T-cell (primary cell): ENCODE measurements at regions of chr2 and their contacts with region 1.

Region 1: DNA sequence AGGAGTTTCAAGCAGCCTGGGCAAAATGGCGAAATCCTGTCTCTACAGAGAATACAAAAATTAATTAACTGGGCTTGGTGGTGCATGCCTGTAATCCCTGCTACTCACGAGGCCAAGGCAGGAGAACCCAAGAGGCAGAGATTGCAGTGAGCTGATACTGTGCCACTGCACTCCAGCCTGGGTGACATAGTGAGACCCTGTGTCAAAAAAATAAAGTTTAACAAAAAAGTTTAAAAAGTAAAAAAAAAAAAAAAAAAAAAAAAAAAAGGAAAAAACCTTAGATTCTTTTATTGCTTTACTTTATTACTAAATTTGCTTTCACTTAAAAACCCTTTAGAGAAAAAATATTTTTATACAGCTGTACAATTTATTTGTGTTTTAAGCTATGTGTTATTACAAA is 10.7 kb downstream of the CREB1 start:
- DNase-seq: no peak
- ATAC-seq: no peak
- H3K4me3 ChIP-seq: no peak overlapping the region
- H3K4me3 Mint-ChIP-seq: peak overlapping the region in 1 of 3 donors; percentile 33
- H3K27ac ChIP-seq: no peak overlapping the region
- H3K27ac Mint-ChIP-seq: peak overlapping the region in 1 of 2 donors; percentile 35
- H3K4me1 ChIP-seq: peaks cover 11 to 34% of the 10 kb centered on the region in 2 experiments
- H3K4me1 Mint-ChIP-seq: peaks cover 68 to 83% (median 77%) of the 10 kb centered on the region in 3 donors
- H3K27me3 ChIP-seq: no peaks in the 10 kb centered on the region
- H3K27me3 Mint-ChIP-seq: no peaks in the 10 kb centered on the region

Region 2: DNA sequence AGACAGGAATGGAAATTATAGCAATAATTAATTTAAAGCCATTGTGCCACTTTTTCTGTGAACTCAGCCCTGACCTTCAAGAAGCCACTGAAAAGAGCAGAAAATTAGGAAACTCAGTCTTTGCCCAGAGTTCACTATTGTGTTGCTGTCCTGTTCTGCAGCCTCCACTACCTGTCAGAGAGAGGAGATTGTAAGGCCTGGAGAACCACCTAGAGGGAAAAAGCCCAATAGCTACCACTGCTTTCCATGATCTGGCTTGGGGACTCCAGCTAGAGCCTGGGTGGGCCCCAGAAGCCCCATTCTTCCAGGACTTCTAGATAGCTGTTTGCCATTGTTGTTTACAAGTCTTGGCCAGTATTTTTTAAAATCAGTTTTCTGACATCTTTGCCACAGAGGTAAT is 198.6 kb before region 1 on chr2:
- CTCF ChIA-PET with region 1: no interaction called
- POLR2A ChIA-PET with region 1: interaction called in 1 of 2 experiments, 15 read pairs
- DNase-seq: no peak
- ATAC-seq: no peak
- H3K4me3 ChIP-seq: no peak overlapping the region
- H3K4me3 Mint-ChIP-seq: no peak overlapping the region
- H3K27ac ChIP-seq: no peak overlapping the region
- H3K27ac Mint-ChIP-seq: no peak overlapping the region
- H3K4me1 ChIP-seq: peaks cover 0 to 5% of the 10 kb centered on the region in 2 experiments
- H3K4me1 Mint-ChIP-seq: peaks cover 11 to 12% (median 12%) of the 10 kb centered on the region in 3 donors
- H3K27me3 ChIP-seq: peaks cover 0 to 7% of the 10 kb centered on the region in 2 experiments
- H3K27me3 Mint-ChIP-seq: no peaks in the 10 kb centered on the region

Region 3: DNA sequence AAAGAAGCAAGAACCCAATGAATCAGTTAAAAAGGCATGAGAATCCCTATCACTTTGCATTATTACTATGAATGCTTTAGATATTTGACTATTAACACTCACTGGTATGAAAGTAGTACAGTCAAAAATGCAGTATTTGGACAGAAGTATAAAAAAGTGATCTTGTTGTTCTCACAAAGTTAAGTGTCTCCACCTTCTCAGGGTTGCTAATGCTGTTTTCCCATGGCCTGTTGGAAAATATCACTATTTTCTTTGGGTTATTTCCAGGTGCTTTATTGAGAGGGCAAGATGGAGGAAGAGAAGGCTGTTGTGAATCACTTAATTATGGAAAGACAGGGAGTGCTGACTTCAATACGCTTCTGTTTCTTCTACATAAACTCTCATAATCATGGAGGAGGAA is 24.2 kb before region 1 on chr2:
- CTCF ChIA-PET with region 1: interaction called in 1 of 2 experiments, 11 read pairs
- POLR2A ChIA-PET with region 1: no interaction called
- DNase-seq: no peak
- ATAC-seq: no peak
- H3K4me3 ChIP-seq: no peak overlapping the region
- H3K4me3 Mint-ChIP-seq: no peak overlapping the region
- H3K27ac ChIP-seq: no peak overlapping the region
- H3K27ac Mint-ChIP-seq: no peak overlapping the region
- H3K4me1 ChIP-seq: peaks cover 0 to 13% of the 10 kb centered on the region in 2 experiments
- H3K4me1 Mint-ChIP-seq: peaks cover 0 to 10% (median 5%) of the 10 kb centered on the region in 3 donors
- H3K27me3 ChIP-seq: no peaks in the 10 kb centered on the region
- H3K27me3 Mint-ChIP-seq: peaks cover 0 to 3% of the 10 kb centered on the region in 2 donors

Region 4: GRCh38 chr2:207529330-207530159 is 10.9 kb before region 1 on chr2 and contains the start of gene CREB1:
- CTCF ChIA-PET with region 1: interaction called, 3 to 4 read pairs
- POLR2A ChIA-PET with region 1: interaction called, 6 to 13 read pairs
- DNase-seq: peak; percentile 98 to 100 (median 99)
- ATAC-seq: peak; percentile 82 to 90 (median 86)
- H3K4me3 ChIP-seq: peak within 1 kb of the TSS; percentile 83 to 100
- H3K4me3 Mint-ChIP-seq: peak within 1 kb of the TSS; percentile 84 to 100 (median 99)
- H3K27ac ChIP-seq: peak within 1 kb of the TSS; percentile 100
- H3K27ac Mint-ChIP-seq: peak within 1 kb of the TSS; percentile 100
- H3K4me1 ChIP-seq: peaks cover 40 to 58% of the 10 kb centered on the region in 2 experiments
- H3K4me1 Mint-ChIP-seq: peaks cover 55 to 69% (median 67%) of the 10 kb centered on the region in 3 donors
- H3K27me3 ChIP-seq: no peaks in the 10 kb centered on the region
- H3K27me3 Mint-ChIP-seq: no peaks in the 10 kb centered on the region
- total RNA-seq, gene CREB1: 94.0 to 118 (median 100) TPM

Region 5: DNA sequence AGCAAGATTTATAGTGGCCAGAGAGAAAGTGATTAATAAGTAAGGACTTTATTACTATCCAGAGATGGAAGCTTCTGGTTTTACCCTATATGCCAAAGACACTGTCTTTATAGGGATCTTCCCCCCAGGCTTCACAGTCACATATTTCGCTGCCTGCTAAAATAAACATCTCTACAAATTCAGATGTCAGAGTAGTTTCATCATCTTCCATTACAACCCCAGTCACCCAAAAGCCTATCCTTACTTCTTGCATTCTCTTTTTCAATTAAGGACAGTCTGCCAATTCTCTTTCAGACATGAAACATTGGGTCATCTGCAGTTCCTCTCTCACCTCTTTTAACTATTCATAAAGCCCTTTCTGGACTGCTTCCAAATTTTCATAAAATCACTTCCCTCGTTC is 17.7 kb after region 1 on chr2:
- CTCF ChIA-PET with region 1: no interaction called
- POLR2A ChIA-PET with region 1: no interaction called
- DNase-seq: no peak
- ATAC-seq: no peak
- H3K4me3 ChIP-seq: no peak overlapping the region
- H3K4me3 Mint-ChIP-seq: no peak overlapping the region
- H3K27ac ChIP-seq: no peak overlapping the region
- H3K27ac Mint-ChIP-seq: no peak overlapping the region
- H3K4me1 ChIP-seq: peaks cover 0 to 1% of the 10 kb centered on the region in 2 experiments
- H3K4me1 Mint-ChIP-seq: peaks cover 36 to 49% (median 40%) of the 10 kb centered on the region in 3 donors
- H3K27me3 ChIP-seq: no peaks in the 10 kb centered on the region
- H3K27me3 Mint-ChIP-seq: no peaks in the 10 kb centered on the region

Region 6: GRCh38 chr2:207993151-207993763 is 452.8 kb after region 1 on chr2:
- CTCF ChIA-PET with region 1: no interaction called
- POLR2A ChIA-PET with region 1: no interaction called
- DNase-seq: no peak
- ATAC-seq: no peak
- H3K4me3 ChIP-seq: no peak overlapping the region
- H3K4me3 Mint-ChIP-seq: no peak overlapping the region
- H3K27ac ChIP-seq: no peak overlapping the region
- H3K27ac Mint-ChIP-seq: no peak overlapping the region
- H3K4me1 ChIP-seq: peaks cover 0 to 2% of the 10 kb centered on the region in 2 experiments
- H3K4me1 Mint-ChIP-seq: peaks cover 19 to 35% (median 27%) of the 10 kb centered on the region in 3 donors
- H3K27me3 ChIP-seq: no peaks in the 10 kb centered on the region
- H3K27me3 Mint-ChIP-seq: no peaks in the 10 kb centered on the region

Region 7: GRCh38 chr2:208013285-208014178 is 473.1 kb after region 1 on chr2:
- CTCF ChIA-PET with region 1: no interaction called
- POLR2A ChIA-PET with region 1: interaction called in 1 of 2 experiments, 12 read pairs
- DNase-seq: no peak
- ATAC-seq: peak in 3 of 4 experiments; percentile 38 to 60 (median 44)
- H3K4me3 ChIP-seq: no peak overlapping the region
- H3K4me3 Mint-ChIP-seq: no peak overlapping the region
- H3K27ac ChIP-seq: no peak overlapping the region
- H3K27ac Mint-ChIP-seq: peak overlapping the region in 1 of 2 donors; percentile 1
- H3K4me1 ChIP-seq: peaks cover 0 to 3% of the 10 kb centered on the region in 2 experiments
- H3K4me1 Mint-ChIP-seq: peaks cover 36 to 59% (median 43%) of the 10 kb centered on the region in 3 donors
- H3K27me3 ChIP-seq: no peaks in the 10 kb centered on the region
- H3K27me3 Mint-ChIP-seq: no peaks in the 10 kb centered on the region